ENCODE measurements at regions of chr1 and their contacts with region 1.

Region 1: GRCh38 chr1:15847100-15847892 is at the start of gene SPEN:
- DNase-seq: peak; percentile 97
- H3K4me3 Mint-ChIP-seq: peak within 1 kb of the TSS; percentile 97
- H3K27ac Mint-ChIP-seq: peak within 1 kb of the TSS; percentile 97
- H3K4me1 Mint-ChIP-seq: peaks cover 44% of the 10 kb centered on the region
- H3K27me3 Mint-ChIP-seq: no peaks in the 10 kb centered on the region
- total RNA-seq, gene SPEN: 30.7 to 33.7 TPM

Region 2: DNA sequence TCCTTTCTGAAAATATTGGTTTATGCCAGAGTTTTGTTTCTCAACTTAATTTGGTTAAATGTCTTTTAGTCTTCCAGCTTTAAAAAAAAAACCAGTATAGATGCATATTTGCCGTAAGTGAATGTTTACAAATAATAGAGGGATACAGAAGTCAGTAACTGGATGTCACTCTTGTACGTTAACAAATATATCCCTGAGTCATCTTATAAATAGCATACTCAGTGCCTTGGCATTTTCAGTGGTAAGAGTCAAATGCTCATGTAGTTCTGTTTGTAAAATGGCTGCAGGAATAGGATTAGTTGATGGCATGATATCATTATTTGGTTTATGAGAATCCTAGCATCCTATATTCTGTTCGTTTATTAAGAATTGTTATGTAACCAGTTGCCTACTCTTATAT is 55.6 kb after region 1 on chr1:
- CTCF ChIA-PET with region 1: no interaction called
- intact Hi-C with region 1: loop called (anchors 5 kb)
- DNase-seq: no peak
- H3K4me3 Mint-ChIP-seq: no peak overlapping the region
- H3K27ac Mint-ChIP-seq: no peak overlapping the region
- H3K4me1 Mint-ChIP-seq: peaks cover 37% of the 10 kb centered on the region
- H3K27me3 Mint-ChIP-seq: no peaks in the 10 kb centered on the region